ENCODE measurements at regions of chr2 and their contacts with region 1.

Region 1: GRCh38 chr2:102240640-102241370 is 54.0 kb downstream of the IL1RL2 start:
- DNase-seq: peak; percentile 90
- H3K4me3 Mint-ChIP-seq: no peak overlapping the region
- H3K27ac Mint-ChIP-seq: peak overlapping the region; percentile 26
- H3K4me1 Mint-ChIP-seq: peaks cover 28% of the 10 kb centered on the region
- H3K27me3 Mint-ChIP-seq: no peaks in the 10 kb centered on the region

Region 2: DNA sequence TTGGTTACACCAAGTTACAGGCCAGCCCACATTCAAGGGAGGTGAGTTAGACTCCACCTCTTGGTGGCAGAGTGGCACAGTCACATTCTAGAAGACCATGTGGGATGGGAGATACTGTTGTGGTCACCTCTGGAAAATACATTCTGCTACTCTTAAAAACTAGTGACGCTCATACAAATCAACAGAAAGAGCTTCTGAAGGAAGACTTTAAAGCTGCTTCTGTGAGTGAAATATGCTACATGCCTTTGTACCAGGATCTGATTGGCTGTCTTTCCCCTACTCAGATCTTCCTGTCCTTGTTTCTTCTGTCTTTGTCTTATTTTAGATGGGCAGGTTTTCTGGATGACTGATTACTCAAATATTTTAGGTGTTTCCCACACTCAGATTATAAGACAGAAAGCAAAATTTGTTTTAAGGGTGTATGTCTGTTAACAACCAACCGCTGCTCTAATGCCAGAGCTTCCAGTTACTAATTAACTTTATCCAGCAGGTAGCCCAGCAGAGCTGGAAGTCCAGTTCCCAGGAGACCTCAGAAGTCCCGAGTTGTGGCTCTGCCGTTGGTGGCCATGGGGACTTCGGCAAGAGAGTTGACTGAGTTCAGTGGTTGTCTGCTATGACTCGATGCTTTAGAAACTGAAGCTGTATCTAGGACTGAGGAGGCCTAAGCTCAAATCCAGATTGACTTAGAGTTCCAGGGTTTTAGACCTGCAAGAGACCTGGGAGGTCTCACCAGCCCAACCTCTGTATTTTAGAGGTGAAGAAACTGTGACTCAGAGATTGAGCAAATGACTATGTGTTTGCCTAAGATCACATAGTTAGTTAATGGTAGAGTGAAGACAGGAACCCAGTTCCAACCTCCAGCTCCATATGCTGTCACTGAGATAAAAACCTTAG is 241.7 kb before region 1 on chr2:
- CTCF ChIA-PET with region 1: interaction called, 13 read pairs
- DNase-seq: no peak
- H3K4me3 Mint-ChIP-seq: no peak overlapping the region
- H3K27ac Mint-ChIP-seq: no peak overlapping the region
- H3K4me1 Mint-ChIP-seq: peaks cover 12% of the 10 kb centered on the region
- H3K27me3 Mint-ChIP-seq: no peaks in the 10 kb centered on the region

Region 3: DNA sequence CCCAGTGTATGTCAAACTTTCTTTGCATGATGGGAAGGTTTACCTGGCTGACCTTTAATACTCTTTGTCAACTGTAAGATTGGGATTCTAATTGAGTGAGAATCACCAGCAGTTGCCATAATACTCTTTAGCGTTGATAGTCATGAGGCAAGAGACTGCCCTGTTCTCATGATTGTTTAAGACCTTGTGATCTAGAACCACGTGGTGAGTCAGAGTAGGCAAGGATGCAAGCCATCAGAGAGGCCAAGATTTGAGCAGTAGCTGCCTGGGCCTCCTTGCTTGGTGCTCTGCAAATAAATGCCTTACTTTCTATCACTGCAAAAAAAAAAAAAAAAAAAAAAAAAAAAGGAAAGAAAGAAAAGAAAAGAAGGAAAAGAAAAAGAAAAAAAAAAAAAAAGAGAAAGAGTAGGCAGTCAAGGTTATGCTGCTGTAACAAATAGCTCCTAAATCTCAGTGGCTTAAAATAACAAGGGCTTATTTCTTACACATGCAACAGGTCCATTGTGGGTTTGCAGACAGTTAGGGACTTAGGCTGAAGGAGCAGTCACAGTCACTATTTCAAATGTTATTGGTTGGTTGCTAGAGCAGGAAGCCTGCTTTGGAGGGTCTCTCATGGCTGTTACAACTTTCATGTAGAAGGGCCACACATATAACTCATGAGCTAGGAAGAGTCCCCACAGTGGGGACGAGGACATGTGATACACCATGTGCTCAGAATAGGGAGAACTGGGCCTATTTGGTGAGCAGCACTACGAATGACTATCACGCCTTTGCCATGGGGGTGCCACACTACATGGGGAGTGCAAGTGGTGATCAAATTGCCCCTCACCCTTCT is 227.4 kb before region 1 on chr2:
- CTCF ChIA-PET with region 1: interaction called, 52 read pairs
- DNase-seq: no peak
- H3K4me3 Mint-ChIP-seq: no peak overlapping the region
- H3K27ac Mint-ChIP-seq: no peak overlapping the region
- H3K4me1 Mint-ChIP-seq: no peaks in the 10 kb centered on the region
- H3K27me3 Mint-ChIP-seq: no peaks in the 10 kb centered on the region

Region 4: DNA sequence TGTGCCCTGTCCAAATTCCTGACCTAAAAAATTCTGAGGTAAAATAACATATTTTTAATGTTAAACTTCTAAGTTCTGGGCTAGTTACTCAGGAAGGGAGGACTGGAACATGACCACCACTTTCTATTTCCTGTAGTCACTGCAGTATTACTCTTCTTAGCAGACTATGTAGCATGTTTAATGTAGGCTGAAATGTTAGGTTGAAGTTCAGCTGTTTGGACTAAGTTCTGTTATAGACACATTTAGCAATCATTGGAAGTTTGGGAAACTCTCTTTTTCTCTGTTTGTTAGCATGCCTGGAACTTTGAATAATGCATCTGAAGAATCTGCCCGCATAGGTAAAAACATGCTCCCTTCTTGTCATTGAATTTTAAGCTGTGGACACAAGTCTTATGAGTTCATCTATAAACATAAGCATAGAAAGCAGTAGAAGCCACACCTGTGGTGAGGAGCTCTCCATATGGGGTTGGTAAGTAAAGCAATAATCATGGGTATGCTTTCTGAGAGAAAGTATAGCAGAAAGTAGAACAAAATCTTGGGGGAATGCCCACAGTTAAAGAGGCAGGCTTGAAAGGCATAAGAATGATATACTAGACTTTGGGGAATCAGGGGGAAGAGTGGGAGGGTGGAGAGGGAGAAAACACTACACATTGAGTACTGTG is 196.4 kb before region 1 on chr2:
- CTCF ChIA-PET with region 1: no interaction called
- DNase-seq: no peak
- H3K4me3 Mint-ChIP-seq: no peak overlapping the region
- H3K27ac Mint-ChIP-seq: no peak overlapping the region
- H3K4me1 Mint-ChIP-seq: peaks cover 8% of the 10 kb centered on the region
- H3K27me3 Mint-ChIP-seq: peaks cover 46% of the 10 kb centered on the region

Region 5: GRCh38 chr2:102166189-102166845 is 74.5 kb before region 1 on chr2:
- CTCF ChIA-PET with region 1: interaction called, 11 read pairs
- DNase-seq: no peak
- H3K4me3 Mint-ChIP-seq: no peak overlapping the region
- H3K27ac Mint-ChIP-seq: no peak overlapping the region
- H3K4me1 Mint-ChIP-seq: peaks cover 5% of the 10 kb centered on the region
- H3K27me3 Mint-ChIP-seq: no peaks in the 10 kb centered on the region

Region 6: DNA sequence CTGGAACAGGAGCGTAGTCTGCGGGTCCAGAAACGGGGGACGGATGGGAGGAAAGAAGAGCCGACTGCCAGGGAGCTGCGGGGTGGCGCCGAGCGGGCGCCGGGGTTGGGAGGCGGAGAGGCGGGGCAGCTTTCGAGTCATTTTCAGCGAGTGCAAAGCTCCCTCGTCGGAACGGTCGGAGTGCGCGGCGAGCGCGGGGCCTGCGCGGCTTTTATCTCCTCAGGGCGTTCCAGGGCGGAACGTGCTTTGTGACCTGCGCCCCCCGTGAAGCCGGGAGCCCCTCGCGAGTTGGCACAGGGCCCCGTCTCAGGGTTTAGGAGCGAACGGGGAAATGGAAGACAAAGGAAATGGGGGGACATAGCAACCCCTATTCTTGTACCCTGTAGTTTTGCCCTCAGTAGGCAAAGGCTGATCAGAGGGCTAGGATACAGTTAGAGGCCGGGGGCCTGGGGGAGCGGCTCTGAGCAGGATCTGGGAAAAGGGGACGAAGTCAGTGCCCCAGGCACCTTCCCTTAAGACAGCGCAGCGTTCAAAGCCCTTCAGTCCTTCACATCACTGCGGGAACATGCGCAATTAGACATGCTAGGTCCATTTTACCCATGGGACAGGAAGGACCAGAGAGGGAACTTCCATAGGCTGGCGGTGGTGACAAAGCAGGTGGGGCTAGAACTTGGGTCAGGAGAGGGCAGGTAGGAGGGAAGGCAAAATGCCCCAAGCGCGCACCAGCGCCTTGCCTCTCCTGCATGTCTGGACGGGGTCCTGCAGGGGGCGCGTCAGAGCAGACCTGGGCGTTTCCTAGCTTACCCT is 10.4 kb after region 1 on chr2:
- CTCF ChIA-PET with region 1: interaction called, 26 read pairs
- DNase-seq: peak; percentile 67
- H3K4me3 Mint-ChIP-seq: peak overlapping the region; percentile 73
- H3K27ac Mint-ChIP-seq: peak overlapping the region; percentile 78
- H3K4me1 Mint-ChIP-seq: peaks cover 45% of the 10 kb centered on the region
- H3K27me3 Mint-ChIP-seq: peaks cover 11% of the 10 kb centered on the region

Region 7: GRCh38 chr2:102442967-102443828 is 202.4 kb after region 1 on chr2:
- CTCF ChIA-PET with region 1: interaction called, 55 read pairs
- DNase-seq: peak; percentile 61
- H3K4me3 Mint-ChIP-seq: peak overlapping the region; percentile 17
- H3K27ac Mint-ChIP-seq: no peak overlapping the region
- H3K4me1 Mint-ChIP-seq: peaks cover 13% of the 10 kb centered on the region
- H3K27me3 Mint-ChIP-seq: no peaks in the 10 kb centered on the region

Measured in activated naive CD4-positive, alpha-beta T cell treated with anti-CD3 and anti-CD28 coated beads, Interleukin-2, amount 10 ng/mL, durations not matched to agents 7 days and 5 days (primary cell).